WTC11 (cell line): ENCODE measurements at regions of chr14 and their contacts with region 1.

Region 1: DNA sequence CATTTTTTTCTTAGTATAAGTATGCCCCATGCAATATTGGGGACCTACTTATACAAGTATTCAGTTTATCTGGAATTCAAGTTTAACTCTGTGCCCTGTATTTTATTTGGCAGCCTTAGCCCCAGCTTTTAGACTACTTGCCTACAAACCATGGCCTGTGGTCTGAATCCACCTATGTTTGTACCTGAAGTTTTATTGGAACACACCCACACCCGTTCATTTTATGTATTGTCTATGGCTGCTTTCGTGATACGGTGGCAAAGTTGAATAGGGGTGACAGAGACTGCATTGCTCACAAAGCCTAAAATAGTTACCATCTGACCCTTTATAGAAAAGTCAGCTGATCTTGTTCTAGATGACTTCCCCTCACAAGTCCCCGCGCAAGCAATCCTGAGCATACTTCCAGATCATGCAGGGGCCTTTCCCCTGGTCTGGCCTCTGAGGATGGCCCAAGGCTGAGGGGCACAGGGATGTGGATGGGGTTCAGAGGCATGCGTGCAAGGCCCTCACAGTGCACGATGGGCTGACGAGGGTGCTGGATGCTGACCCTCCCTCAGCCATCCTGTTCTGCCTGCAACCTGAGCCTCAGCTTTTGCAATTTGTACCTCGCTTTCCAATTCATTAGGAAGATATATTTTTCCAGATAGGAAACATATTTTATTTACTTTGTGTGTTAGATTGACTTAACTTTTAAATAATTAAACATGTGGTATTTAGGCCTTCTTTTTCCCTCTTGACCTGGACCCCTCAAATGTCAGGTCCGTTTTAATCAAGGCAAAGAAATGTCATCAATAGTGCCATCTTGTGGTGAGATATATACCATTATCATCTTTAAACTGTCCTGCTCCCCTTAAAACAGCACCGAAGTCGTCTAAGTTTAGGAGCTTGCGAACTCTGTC is 527.3 kb upstream of the CCDC196 start:
- DNase-seq: no peak
- ATAC-seq: peak; percentile 35
- H3K4me3 Mint-ChIP-seq: no peak overlapping the region
- H3K27ac Mint-ChIP-seq: no peak overlapping the region
- H3K4me1 Mint-ChIP-seq: peaks cover 31% of the 10 kb centered on the region
- H3K27me3 Mint-ChIP-seq: no peaks in the 10 kb centered on the region
- CTCF ChIP-seq: peak; percentile 27; the same call in 1 of the 2 replicates

Region 2: GRCh38 chr14:65832431-65833266 is 126.3 kb before region 1 on chr14:
- CTCF ChIA-PET with region 1: interaction called, 13 read pairs
- POLR2A ChIA-PET with region 1: no interaction called
- DNase-seq: no peak
- ATAC-seq: peak; percentile 48
- H3K4me3 Mint-ChIP-seq: no peak overlapping the region
- H3K27ac Mint-ChIP-seq: no peak overlapping the region
- H3K4me1 Mint-ChIP-seq: peaks cover 54% of the 10 kb centered on the region
- H3K27me3 Mint-ChIP-seq: no peaks in the 10 kb centered on the region
- CTCF ChIP-seq: no peak

Region 3: DNA sequence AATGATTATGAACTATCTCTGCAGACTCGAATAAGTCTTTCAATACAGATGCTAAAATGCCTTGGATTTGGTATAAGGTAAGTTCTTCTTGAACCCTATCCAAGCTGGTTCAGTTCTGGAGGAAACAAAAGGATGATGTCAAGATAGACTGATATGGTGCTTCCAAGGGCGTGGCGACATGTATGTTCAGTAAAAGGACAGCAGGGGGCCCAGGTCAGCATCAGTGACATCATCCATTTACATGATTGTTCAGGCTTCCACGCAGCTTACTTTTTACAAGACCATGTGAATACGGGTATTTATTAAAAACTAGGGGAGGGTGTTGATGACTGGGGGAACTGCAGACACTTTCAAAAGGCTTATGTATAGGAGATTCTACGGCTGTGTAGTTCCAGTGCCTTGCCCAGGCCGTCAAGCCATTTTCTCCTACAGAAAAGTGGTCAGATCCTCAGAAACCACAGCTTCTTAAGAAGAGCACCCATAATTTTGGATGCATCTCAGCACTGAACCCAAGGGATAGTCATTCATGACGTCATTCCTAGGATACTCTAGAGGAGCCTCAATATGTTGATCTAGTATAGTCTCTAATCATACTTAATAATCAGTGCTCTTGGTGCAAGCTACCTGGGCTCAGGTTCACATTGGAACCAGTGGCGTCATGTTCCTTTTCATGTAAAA is 18.7 kb before region 1 on chr14:
- CTCF ChIA-PET with region 1: interaction called, 13 read pairs
- POLR2A ChIA-PET with region 1: no interaction called
- DNase-seq: no peak
- ATAC-seq: peak; percentile 39
- H3K4me3 Mint-ChIP-seq: no peak overlapping the region
- H3K27ac Mint-ChIP-seq: no peak overlapping the region
- H3K4me1 Mint-ChIP-seq: peaks cover 38% of the 10 kb centered on the region
- H3K27me3 Mint-ChIP-seq: no peaks in the 10 kb centered on the region; the same call in 1 of the 2 replicates
- CTCF ChIP-seq: no peak

Region 4: DNA sequence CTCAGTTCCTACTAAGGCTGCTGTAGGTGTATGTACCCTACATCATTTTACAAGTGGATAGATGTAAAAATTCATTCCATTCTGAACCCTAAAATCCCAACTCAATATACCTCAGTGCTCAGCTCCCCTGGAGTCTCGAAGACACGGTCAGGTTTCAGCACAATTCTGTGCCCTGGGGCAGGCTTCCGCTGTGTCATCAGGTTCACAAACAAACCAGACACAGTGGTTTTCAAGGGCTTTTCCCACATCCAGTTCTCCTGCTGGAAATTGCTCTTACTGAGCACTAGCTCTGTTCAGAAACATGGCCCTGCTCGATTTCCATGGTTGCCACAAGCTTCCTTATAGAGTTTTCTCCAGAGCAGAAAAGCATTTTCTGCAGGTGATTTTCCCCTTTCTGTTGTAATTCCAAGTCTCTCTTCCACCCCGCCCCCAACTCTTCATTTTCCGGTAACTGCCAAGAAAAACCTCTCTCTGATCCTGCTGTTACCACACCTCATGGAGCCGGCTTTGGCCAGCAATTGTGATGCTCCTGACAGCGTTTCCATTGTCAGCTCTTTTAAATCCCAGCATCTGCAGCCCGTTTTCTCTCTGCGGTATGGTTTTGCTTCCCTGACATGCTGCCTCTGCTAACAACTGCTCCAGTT is 44.3 kb after region 1 on chr14:
- CTCF ChIA-PET with region 1: interaction called, 10 read pairs
- POLR2A ChIA-PET with region 1: no interaction called
- DNase-seq: no peak
- ATAC-seq: no peak; the same call in 1 of the 2 replicates
- H3K4me3 Mint-ChIP-seq: no peak overlapping the region
- H3K27ac Mint-ChIP-seq: no peak overlapping the region; the same call in 1 of the 2 replicates
- H3K4me1 Mint-ChIP-seq: peaks cover 27% of the 10 kb centered on the region
- H3K27me3 Mint-ChIP-seq: peaks cover 6% of the 10 kb centered on the region; the same call in 1 of the 2 replicates
- CTCF ChIP-seq: no peak